CD4-positive, alpha-beta T cell (primary cell): ENCODE measurements at regions of chr5 and their contacts with region 1.

Region 1: DNA sequence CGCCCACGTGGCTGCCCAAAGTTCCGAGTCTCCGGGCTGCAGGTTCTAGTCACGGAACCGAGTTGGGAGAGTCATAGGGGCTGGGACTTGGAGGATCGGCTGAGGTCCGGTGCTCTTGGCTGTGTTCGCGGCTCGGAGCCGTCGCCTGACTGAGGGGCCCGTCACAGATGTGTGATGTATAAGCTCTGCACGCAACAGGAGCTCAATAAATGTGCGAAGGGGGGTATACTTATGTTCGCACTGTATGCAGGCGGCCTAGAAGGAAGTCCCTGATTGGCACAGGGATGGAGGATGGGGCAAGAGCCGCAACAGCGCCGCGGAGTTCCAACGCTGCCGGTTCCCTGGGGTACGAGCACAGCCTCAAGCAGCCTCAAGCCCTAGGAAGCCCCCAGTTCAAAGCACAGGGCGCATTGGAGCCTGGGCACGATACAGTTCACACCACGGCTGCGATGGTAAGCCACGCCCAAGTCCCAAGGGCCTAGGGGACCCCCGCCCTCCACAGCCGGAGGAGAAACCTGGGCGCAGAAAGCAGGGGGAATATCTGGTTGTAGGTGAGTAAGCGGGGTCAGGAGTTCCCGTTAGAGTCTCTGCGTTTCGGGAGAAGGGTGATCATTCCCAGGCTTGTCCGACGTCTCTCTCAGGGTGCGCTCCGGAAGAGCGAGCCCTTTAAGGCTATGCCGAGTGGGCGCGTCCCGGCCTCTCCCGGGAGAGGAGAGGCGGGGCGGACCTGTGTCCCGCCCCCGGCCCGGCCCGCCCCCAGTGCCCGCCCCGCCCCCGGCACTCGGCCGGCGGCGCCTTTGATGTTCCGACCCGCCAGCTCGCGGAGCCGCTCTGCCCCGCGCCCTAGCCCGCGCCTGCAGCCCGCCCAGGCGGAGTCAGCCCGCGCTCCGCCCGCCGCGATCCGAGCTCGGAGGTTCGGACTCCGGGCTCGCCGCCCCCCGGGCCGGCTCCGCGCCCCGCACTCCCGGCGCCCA is at the start of gene TCF7:
- DNase-seq: peak; percentile 64 to 92 (median 82)
- ATAC-seq: peak; percentile 67
- H3K4me3 ChIP-seq: peak within 1 kb of the TSS; percentile 97
- H3K4me3 Mint-ChIP-seq: peak within 1 kb of the TSS; percentile 98
- H3K27ac ChIP-seq: peak within 1 kb of the TSS; percentile 80 to 96
- H3K27ac Mint-ChIP-seq: peak within 1 kb of the TSS; percentile 98
- H3K4me1 ChIP-seq: peaks cover 73% of the 10 kb centered on the region
- H3K4me1 Mint-ChIP-seq: peaks cover 56% of the 10 kb centered on the region
- H3K27me3 ChIP-seq: no peaks in the 10 kb centered on the region
- H3K27me3 Mint-ChIP-seq: no peaks in the 10 kb centered on the region
- CTCF ChIP-seq: no peak
- total RNA-seq, gene TCF7: 480 to 493 TPM

Region 2: DNA sequence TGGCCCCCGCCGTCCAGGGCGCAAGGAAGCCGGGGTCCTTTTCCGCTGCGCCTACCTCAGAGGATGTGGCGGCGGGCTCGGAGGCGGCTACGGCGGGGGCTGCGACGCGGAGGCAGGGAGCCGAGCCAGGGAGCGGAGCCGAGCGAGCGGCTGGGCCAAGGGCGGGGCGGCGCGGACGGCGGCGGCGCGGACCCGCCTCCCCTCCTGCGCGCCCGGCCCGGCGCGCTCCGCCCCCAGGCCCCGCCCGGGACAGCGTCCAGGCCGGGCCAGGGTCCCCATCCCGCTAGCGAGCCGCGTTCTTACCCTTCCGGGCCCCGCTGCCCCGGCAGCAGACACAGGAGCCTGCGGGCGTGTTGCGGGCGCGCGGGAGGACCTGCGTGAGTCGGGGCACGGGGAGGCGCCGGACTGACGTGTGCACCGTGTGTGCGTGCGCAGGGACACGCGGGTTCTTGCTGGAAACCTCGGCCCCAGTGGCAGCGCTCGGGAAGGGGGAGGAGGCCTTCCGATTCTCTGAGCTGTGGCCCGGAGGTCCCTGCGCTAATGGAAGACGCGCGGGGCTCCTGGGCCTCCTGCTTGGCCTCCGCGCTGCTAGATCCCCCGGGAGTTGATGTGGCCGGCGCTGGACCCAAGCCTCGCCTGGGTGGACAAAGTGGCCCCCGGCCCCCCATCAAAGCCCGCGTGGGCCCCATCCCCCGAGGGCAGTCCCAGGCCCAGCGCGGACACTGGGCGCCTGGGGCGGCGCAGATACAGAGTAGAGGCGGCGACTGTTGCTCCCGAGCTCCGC is 109.4 kb before region 1 on chr5 and contains the start of gene VDAC1:
- CTCF ChIA-PET with region 1: no interaction called
- POLR2A ChIA-PET with region 1: interaction called, 5 read pairs
- intact Hi-C with region 1: loop called in 1 of 2 experiments (anchors 1 kb)
- DNase-seq: peak; percentile 69 to 97 (median 80)
- ATAC-seq: peak; percentile 82
- H3K4me3 ChIP-seq: peak within 1 kb of the TSS; percentile 85
- H3K4me3 Mint-ChIP-seq: peak within 1 kb of the TSS; percentile 99
- H3K27ac ChIP-seq: peak within 1 kb of the TSS; percentile 77 to 91
- H3K27ac Mint-ChIP-seq: peak within 1 kb of the TSS; percentile 97
- H3K4me1 ChIP-seq: peaks cover 54% of the 10 kb centered on the region
- H3K4me1 Mint-ChIP-seq: peaks cover 48% of the 10 kb centered on the region
- H3K27me3 ChIP-seq: no peaks in the 10 kb centered on the region
- H3K27me3 Mint-ChIP-seq: no peaks in the 10 kb centered on the region
- CTCF ChIP-seq: no peak
- total RNA-seq, gene VDAC1: 46.8 to 50.9 TPM

Region 3: GRCh38 chr5:134070725-134071613 is 43.2 kb before region 1 on chr5:
- CTCF ChIA-PET with region 1: interaction called, 3 read pairs
- POLR2A ChIA-PET with region 1: interaction called, 20 read pairs
- intact Hi-C with region 1: loop called in 1 of 2 experiments (anchors 2 kb)
- DNase-seq: peak in 10 of 14 experiments; percentile 18 to 63 (median 46)
- ATAC-seq: peak; percentile 60
- H3K4me3 ChIP-seq: peak overlapping the region; percentile 61
- H3K4me3 Mint-ChIP-seq: peak overlapping the region; percentile 89
- H3K27ac ChIP-seq: peak overlapping the region in 1 of 2 donors; percentile 60
- H3K27ac Mint-ChIP-seq: peak overlapping the region; percentile 81
- H3K4me1 ChIP-seq: peaks cover 64% of the 10 kb centered on the region
- H3K4me1 Mint-ChIP-seq: peaks cover 74% of the 10 kb centered on the region
- H3K27me3 ChIP-seq: no peaks in the 10 kb centered on the region
- H3K27me3 Mint-ChIP-seq: no peaks in the 10 kb centered on the region
- CTCF ChIP-seq: peak; percentile 30

Region 4: GRCh38 chr5:134086943-134087305 is 27.3 kb before region 1 on chr5:
- CTCF ChIA-PET with region 1: interaction called, 3 read pairs
- POLR2A ChIA-PET with region 1: no interaction called
- intact Hi-C with region 1: loop called in 1 of 2 experiments (anchors 1 kb)
- DNase-seq: peak; percentile 62 to 92 (median 81)
- ATAC-seq: peak; percentile 74
- H3K4me3 ChIP-seq: no peak overlapping the region
- H3K4me3 Mint-ChIP-seq: peak overlapping the region; percentile 76
- H3K27ac ChIP-seq: peak overlapping the region; percentile 53 to 61
- H3K27ac Mint-ChIP-seq: peak overlapping the region; percentile 95
- H3K4me1 ChIP-seq: peaks cover 90% of the 10 kb centered on the region
- H3K4me1 Mint-ChIP-seq: peaks cover 88% of the 10 kb centered on the region
- H3K27me3 ChIP-seq: no peaks in the 10 kb centered on the region
- H3K27me3 Mint-ChIP-seq: no peaks in the 10 kb centered on the region
- CTCF ChIP-seq: no peak

Region 5: GRCh38 chr5:134125039-134126015 is 11.1 kb after region 1 on chr5:
- CTCF ChIA-PET with region 1: interaction called, 5 read pairs
- POLR2A ChIA-PET with region 1: no interaction called
- intact Hi-C with region 1: loop called in 1 of 2 experiments (anchors 1 kb)
- DNase-seq: peak in 1 of 14 experiments; percentile 57
- ATAC-seq: no peak
- H3K4me3 ChIP-seq: peak overlapping the region; percentile 92
- H3K4me3 Mint-ChIP-seq: peak overlapping the region; percentile 95
- H3K27ac ChIP-seq: peak overlapping the region; percentile 75 to 96
- H3K27ac Mint-ChIP-seq: peak overlapping the region; percentile 98
- H3K4me1 ChIP-seq: peaks cover 100% of the 10 kb centered on the region
- H3K4me1 Mint-ChIP-seq: peaks cover 98% of the 10 kb centered on the region
- H3K27me3 ChIP-seq: no peaks in the 10 kb centered on the region
- H3K27me3 Mint-ChIP-seq: no peaks in the 10 kb centered on the region
- CTCF ChIP-seq: no peak

Region 6: GRCh38 chr5:134176511-134177368 is 62.6 kb after region 1 on chr5 and contains the start of gene SKP1:
- CTCF ChIA-PET with region 1: no interaction called
- POLR2A ChIA-PET with region 1: interaction called, 22 read pairs
- intact Hi-C with region 1: no loop called
- DNase-seq: peak; percentile 76 to 94 (median 86)
- ATAC-seq: peak; percentile 83
- H3K4me3 ChIP-seq: peak within 1 kb of the TSS; percentile 98
- H3K4me3 Mint-ChIP-seq: peak within 1 kb of the TSS; percentile 97
- H3K27ac ChIP-seq: peak within 1 kb of the TSS; percentile 98 to 99
- H3K27ac Mint-ChIP-seq: peak within 1 kb of the TSS; percentile 98
- H3K4me1 ChIP-seq: peaks cover 19% of the 10 kb centered on the region
- H3K4me1 Mint-ChIP-seq: peaks cover 36% of the 10 kb centered on the region
- H3K27me3 ChIP-seq: no peaks in the 10 kb centered on the region
- H3K27me3 Mint-ChIP-seq: no peaks in the 10 kb centered on the region
- CTCF ChIP-seq: no peak
- total RNA-seq, gene SKP1: 303 to 314 TPM